ENCODE measurements at regions of chr16 and their contacts with region 1.

Region 1: DNA sequence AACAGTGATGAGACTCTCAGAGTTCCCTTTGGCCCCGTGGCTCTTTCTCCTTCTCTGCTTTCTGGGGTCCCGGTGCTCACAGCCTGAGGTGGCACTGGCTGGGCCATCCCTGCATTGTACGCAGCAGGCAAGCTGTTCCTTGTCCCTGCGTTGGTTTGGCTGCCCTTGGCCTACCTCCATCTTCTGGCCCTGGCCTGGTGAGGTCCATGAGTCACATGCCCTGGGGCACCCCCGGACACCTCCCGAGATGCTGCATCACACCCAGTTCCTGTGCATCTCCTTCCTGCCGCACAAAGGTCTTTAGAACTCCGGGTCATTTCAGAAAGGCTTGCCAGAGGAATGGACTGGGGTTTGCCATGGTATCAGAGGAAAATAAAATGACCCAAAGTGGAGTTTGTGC is 9.5 kb downstream of the SULT1A2 start:
- H3K4me3 ChIP-seq: no peak overlapping the region
- H3K27ac ChIP-seq: no peak overlapping the region
- H3K4me1 ChIP-seq: no peaks in the 10 kb centered on the region
- CTCF ChIP-seq: no peak

Region 2: DNA sequence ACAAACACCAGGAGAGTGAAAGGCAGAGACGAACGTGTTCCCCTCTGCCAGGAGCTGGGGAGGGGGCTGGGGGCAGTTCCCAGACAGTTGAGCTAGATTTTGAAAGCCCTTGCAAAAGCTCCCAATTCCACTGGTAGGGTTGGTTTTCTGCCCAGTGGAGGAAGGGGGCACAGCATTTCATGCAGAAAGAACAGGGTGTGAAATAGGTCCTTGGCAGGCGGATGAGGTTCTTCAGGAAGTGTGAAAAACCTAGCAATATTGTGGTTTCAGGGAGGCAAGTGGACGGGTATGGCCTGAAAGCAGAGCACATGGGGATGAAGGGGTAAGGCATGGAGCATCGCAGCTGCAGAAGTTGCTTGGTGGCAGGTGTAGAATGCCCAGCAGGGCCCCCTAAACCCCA is 789.1 kb before region 1 on chr16:
- CTCF ChIA-PET with region 1: no interaction called
- POLR2A ChIA-PET with region 1: interaction called, 11 read pairs
- H3K4me3 ChIP-seq: no peak overlapping the region
- H3K27ac ChIP-seq: no peak overlapping the region
- H3K4me1 ChIP-seq: no peaks in the 10 kb centered on the region
- CTCF ChIP-seq: no peak

Region 3: DNA sequence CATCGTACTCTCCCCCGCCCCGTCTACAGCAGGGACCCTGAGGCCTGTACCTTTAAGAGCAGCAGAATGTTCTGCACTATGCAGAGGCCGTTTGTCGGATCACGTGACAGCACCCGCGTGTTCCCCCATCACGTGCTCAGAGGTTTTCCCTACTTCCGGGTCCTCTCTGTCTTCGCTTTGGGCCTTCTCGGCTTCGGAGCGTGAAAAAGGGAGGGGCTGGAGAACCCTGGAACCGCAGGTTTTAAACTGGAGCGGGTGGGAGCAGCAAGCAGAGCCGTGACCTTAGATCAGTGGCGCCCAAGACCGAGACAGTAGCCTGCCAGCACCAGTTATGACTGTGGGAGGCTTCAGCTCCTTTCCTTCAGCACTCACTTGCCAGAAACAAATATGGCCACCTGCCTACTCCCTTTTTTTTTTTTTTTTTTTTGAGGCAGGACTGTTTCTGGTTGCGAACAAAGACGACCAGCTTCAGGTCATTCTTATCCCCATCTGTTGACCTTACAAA is 95.4 kb before region 1 on chr16 and contains the start of gene CLN3:
- CTCF ChIA-PET with region 1: no interaction called
- POLR2A ChIA-PET with region 1: no interaction called
- H3K4me3 ChIP-seq: peak within 1 kb of the TSS; percentile 84
- H3K27ac ChIP-seq: peak within 1 kb of the TSS; percentile 82
- H3K4me1 ChIP-seq: no peaks in the 10 kb centered on the region
- CTCF ChIP-seq: no peak

Region 4: DNA sequence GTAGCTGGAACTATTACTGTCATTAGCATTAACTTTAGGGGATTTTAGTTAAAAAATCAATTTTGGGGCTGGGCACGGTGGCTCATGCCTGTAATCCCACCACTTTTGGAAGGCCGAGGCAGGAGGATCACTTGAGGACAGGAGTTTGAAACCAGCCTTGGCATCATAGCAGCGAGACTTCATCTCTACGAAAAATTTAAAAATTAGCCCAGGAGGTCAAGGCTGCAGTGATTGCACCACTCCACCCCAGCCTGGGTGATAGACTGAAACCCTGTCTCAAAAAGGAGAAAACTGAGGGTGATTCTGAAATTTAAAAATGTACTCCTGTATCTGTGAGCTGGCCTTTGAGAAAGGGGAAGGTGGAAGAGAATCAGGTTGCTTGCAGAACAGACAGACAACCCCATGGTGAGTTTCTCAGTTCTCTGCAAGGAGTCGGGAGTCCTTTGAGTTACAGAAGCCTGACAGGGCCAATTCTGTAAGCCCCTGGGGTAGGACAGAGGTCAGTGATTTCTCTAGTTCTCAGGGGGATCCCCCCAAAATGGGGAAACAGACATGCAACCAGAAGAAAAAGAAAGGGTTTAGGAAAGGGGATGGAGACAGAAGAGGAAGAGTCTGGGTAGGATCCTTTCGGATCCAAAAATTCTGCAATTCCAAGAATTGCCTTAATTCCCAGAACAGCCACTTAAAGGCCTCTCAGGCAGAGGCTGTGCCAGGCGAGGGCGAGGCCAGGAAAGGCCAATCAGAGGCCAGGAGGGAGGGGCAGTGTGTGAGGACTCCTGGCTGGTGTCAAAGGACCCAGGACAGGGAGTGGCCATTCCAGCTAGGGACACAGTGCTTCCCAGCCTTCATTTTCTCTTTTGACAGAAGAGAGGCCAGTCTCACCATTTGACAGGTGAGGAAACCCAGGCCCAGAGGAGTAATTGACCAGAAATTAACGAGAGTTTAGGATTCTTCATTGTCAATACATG is 55.3 kb before region 1 on chr16:
- CTCF ChIA-PET with region 1: no interaction called
- POLR2A ChIA-PET with region 1: interaction called, 11 read pairs
- H3K4me3 ChIP-seq: no peak overlapping the region
- H3K27ac ChIP-seq: no peak overlapping the region
- H3K4me1 ChIP-seq: no peaks in the 10 kb centered on the region
- CTCF ChIP-seq: no peak

Region 5: DNA sequence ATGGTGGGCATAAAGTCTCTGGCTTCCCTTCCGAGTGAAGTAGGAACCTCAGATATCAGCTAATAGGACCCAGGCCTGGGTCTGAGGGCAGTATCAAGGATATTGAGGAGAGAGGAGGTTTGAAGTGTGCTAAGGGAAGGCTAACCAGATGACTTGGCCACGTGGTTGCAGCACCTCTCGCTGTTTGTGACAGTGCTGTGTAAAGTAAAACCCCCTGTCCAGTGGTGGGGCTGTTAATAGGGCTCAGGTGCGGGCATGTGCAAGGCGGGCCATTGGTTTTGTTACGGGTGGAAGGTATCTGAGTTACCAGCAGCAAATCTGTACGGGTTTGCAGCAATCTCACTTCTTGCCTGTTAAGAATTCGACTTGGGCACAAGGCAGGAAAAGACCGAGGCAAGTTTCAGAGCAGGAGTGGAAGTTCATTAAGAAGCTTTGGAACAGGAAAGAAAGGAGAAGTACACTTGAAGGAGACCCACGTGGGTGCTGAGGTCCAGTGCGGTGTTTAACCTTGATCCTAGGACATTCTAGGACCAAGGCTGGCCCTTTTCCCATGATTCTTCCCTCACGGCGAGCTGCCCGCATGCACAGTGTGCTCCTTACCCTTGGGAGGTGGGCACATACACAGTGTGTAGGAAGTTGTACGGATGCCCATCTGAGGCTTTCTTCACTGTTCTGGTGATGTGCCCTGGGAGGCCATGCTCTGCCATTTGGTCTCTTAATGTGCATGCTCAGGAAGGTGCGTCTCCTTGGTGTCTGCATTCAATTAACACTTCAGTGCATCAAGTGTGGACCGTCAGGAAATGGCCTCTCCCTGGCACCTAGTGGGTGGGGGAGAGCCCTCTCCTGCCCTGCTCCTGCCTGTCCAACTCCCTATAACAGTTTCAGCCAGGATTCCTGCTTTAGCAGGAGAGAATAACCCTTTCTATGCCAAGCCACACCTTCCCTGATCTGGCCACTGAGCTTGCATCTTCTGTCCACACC is 13.4 kb before region 1 on chr16:
- CTCF ChIA-PET with region 1: no interaction called
- POLR2A ChIA-PET with region 1: no interaction called
- H3K4me3 ChIP-seq: no peak overlapping the region
- H3K27ac ChIP-seq: no peak overlapping the region
- H3K4me1 ChIP-seq: no peaks in the 10 kb centered on the region
- CTCF ChIP-seq: no peak

Region 6: DNA sequence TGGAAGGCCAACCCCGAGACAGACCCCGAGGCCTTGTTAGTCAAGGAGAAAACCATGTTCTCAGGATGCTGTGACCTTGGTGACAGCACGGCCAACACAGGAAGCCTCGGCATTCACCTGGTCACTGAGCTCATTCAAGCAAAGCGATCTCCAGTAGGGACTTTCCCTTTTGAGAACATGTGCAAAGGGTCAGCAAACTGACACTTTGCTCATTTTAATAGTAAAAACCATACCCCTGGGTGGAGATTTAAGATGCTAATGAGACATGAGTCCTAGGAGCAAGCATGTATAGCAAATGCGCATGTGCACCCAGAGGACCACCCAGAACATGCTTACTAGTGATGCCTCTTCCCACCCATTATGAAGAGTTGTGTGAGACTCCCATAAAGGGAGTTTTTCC is 15.1 kb after region 1 on chr16:
- CTCF ChIA-PET with region 1: no interaction called
- POLR2A ChIA-PET with region 1: no interaction called
- H3K4me3 ChIP-seq: no peak overlapping the region
- H3K27ac ChIP-seq: no peak overlapping the region
- H3K4me1 ChIP-seq: no peaks in the 10 kb centered on the region
- CTCF ChIP-seq: no peak